ENCODE measurements at regions of chr2 and their contacts with region 1.

Region 1: GRCh38 chr2:168194784-168195522 is 52.4 kb downstream of the STK39 start:
- DNase-seq: peak; percentile 48
- ATAC-seq: peak; percentile 59
- H3K4me3 ChIP-seq: no peak overlapping the region
- H3K4me3 Mint-ChIP-seq: peak overlapping the region; percentile 50
- H3K27ac ChIP-seq: peak overlapping the region in 1 of 2 donors; percentile 27
- H3K27ac Mint-ChIP-seq: peak overlapping the region; percentile 48
- H3K4me1 ChIP-seq: peaks cover 31 to 38% of the 10 kb centered on the region in 2 donors
- H3K4me1 Mint-ChIP-seq: peaks cover 36% of the 10 kb centered on the region
- H3K27me3 ChIP-seq: no peaks in the 10 kb centered on the region
- H3K27me3 Mint-ChIP-seq: no peaks in the 10 kb centered on the region
- CTCF ChIP-seq: no peak

Region 2: DNA sequence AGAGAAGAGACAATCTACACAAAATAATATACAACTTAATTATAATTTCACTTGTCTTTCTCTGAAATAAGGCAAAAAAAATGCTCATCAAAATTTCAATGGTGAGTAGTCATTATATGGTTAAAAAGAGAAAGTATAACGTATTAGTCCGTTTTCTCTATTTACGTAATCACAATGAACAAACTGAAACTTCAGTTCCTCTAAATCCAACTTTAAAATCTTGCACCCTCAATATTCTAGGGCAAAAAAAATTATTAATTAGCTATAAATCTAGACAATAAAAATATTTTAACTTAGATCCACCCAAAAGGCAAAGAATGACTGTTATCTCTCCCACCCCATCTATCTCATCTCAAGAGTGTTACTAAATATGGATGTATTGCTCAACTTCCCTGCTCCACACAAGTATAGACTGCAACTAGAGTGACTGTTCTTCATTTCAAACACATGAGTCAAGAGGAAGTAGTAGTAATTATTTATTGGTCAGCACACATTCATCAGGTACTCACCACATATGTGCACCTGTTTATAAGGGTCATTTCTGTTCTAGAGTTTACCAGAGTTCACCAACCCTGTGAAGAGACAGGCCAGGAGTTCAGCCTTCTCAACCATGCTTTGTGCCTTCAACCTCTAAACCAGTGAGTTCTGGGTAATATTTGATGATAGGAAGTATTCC is 16.1 kb after region 1 on chr2:
- CTCF ChIA-PET with region 1: no interaction called
- POLR2A ChIA-PET with region 1: no interaction called
- intact Hi-C with region 1: loop called (anchors 2 kb)
- DNase-seq: peak; percentile 30
- ATAC-seq: peak; percentile 53
- H3K4me3 ChIP-seq: peak overlapping the region in 4 of 5 experiments; percentile 1 to 48 (median 20)
- H3K4me3 Mint-ChIP-seq: peak overlapping the region; percentile 69
- H3K27ac ChIP-seq: no peak overlapping the region
- H3K27ac Mint-ChIP-seq: no peak overlapping the region
- H3K4me1 ChIP-seq: peaks cover 19 to 29% of the 10 kb centered on the region in 2 donors
- H3K4me1 Mint-ChIP-seq: peaks cover 46% of the 10 kb centered on the region
- H3K27me3 ChIP-seq: no peaks in the 10 kb centered on the region
- H3K27me3 Mint-ChIP-seq: no peaks in the 10 kb centered on the region
- CTCF ChIP-seq: no peak